Breast epithelium (tissue), 4 donors: ENCODE measurements at regions of chr11 and their contacts with region 1.

Region 1: DNA sequence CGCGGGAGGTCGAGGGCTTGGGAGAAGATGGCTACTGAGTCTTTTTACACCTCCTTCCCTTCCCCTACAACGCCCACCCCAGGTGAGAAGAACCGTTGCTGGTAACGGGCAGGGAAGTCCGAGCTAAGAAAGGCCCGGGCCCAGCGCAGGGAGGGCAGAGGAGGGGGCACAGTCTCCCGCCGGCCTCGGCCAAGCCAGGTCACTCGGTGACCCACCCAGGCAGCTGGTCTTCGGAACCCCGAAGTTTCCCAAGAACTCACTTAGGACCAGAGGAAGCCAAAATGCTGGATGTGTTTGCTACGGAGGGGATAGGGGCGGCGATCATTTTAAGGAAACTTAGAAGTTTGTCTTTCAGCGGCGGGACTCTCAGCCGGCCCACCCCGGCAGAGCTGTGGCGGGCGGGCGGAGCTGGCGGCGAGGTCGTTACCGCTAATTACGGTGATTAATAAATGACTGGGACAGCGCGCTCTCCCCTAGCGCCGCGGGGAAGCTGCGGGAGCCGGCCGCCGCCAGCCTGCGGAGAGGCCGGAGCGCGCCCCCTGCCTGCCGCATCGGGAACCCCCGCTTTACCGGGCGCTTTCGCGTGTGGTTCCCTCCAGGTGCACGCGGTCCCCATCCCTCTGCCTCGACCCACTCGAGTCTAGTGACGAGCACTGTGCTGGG is 820 bp downstream of the ROBO3 start:
- DNase-seq: no peak
- H3K4me3 ChIP-seq: peak overlapping the region in 2 of 3 donors; percentile 28 to 56
- H3K27ac ChIP-seq: no peak overlapping the region
- H3K4me1 ChIP-seq: peaks cover 13 to 18% of the 10 kb centered on the region in 2 donors
- H3K27me3 ChIP-seq: peaks cover 14 to 96% of the 10 kb centered on the region in 2 donors
- CTCF ChIP-seq: peak in 2 of 3 donors; percentile 34 to 44
- POLR2A ChIP-seq: no peak

Region 2: DNA sequence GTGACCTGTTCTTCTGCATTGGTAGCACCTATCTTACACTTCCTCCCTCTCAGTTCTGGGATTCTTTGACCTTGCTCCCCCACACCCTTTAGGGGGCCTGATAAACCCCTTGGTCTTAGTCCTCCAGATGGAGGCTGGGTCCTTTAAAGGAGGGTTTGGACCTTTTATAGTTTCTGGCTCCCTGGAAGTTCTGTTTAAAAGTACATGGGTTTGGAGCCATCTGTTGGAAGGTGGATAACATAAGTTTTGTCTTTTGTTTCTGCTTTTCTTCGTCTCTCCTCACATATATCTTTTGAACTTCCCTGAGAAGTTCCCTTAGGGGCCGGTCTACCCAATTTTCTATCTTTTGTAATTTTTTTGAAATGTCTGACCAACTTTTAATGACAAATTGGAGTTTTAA is 1003.5 kb after region 1 on chr11:
- intact Hi-C with region 1: loop called (anchors 5 kb)
- DNase-seq: no peak
- H3K4me3 ChIP-seq: no peak overlapping the region
- H3K27ac ChIP-seq: no peak overlapping the region
- H3K4me1 ChIP-seq: no peaks in the 10 kb centered on the region
- H3K27me3 ChIP-seq: no peaks in the 10 kb centered on the region
- CTCF ChIP-seq: no peak
- POLR2A ChIP-seq: no peak